PC-9 (cell line): ENCODE measurements at regions of chr14 and their contacts with region 1.

Region 1: GRCh38 chr14:75982266-75983018 is 647 bp upstream of the TGFB3 start:
- DNase-seq: peak; percentile 71 to 96
- H3K4me3 ChIP-seq: peak overlapping the region; percentile 85
- H3K27ac ChIP-seq: no peak overlapping the region
- H3K4me1 ChIP-seq: peaks cover 37% of the 10 kb centered on the region
- H3K27me3 ChIP-seq: no peaks in the 10 kb centered on the region
- CTCF ChIP-seq: peak; percentile 79

Region 2: GRCh38 chr14:75293920-75294642 is 688.4 kb before region 1 on chr14:
- CTCF ChIA-PET with region 1: interaction called, 34 read pairs
- POLR2A ChIA-PET with region 1: no interaction called
- intact Hi-C with region 1: no loop called
- DNase-seq: peak; percentile 98 to 100
- H3K4me3 ChIP-seq: peak overlapping the region; percentile 65
- H3K27ac ChIP-seq: peak overlapping the region; percentile 79
- H3K4me1 ChIP-seq: peaks cover 40% of the 10 kb centered on the region
- H3K27me3 ChIP-seq: no peaks in the 10 kb centered on the region
- CTCF ChIP-seq: no peak

Region 3: DNA sequence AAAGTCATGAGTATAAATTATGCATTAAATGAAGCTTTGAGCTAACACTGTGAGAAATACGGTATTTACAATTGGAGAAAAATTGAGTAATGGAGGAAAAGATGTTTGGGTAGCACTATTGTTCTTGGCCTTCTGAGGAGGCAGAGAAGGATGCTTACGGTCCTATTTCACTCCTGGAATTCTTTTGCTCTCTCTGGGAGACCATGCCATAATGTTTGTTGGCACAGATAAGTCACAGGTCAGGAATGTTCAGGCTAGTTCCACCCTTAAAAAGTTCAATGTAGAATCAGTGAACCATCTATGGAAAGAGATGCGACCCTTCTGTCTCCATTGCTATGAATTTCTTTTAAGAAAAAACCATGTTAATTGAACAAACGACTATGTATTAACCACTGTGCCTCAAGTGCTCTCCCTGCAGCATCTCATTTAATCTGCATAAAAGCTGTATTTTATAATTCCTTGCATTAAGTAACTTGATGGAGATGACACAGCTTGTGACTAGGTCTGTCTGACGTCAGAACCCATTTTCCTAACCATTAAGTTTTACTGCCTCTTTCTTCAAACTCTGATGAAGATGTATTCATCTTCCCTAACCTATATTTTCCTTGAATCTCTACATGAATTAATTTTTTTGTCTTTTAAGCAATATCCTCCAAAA is 450.7 kb before region 1 on chr14:
- CTCF ChIA-PET with region 1: no interaction called
- POLR2A ChIA-PET with region 1: interaction called, 10 read pairs
- intact Hi-C with region 1: no loop called
- DNase-seq: peak in 1 of 2 experiments; percentile 76
- H3K4me3 ChIP-seq: no peak overlapping the region
- H3K27ac ChIP-seq: peak overlapping the region; percentile 33
- H3K4me1 ChIP-seq: peaks cover 54% of the 10 kb centered on the region
- H3K27me3 ChIP-seq: no peaks in the 10 kb centered on the region
- CTCF ChIP-seq: no peak

Region 4: DNA sequence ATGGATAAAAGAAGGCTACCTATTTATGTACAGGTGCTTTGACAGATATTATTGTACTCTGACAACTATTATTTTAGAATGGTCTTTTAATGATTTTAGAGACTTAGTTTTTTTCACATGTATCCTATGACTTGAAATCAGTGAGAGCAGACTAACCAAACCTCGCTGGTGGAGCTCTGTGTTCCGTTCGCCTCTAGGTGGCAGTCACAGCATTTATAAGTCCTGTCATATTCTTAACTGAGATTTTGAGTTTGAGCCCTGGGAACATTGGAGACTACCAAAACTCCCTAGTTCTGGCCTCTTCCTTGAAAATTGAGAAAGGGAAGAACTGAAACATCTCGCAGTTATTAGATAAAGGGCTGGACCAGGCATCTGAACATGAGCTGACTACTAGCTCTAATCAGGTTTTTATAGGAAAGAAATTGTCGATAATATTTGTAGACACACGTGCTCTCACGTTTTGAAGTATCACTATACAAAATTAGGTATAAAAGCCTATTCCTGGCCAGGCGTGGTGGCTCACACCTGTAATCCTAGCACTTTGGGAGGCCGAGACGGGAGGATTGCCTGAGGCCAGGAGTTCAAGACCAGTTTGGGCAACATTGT is 273.1 kb before region 1 on chr14:
- CTCF ChIA-PET with region 1: interaction called, 39 read pairs
- POLR2A ChIA-PET with region 1: interaction called, 9 read pairs
- intact Hi-C with region 1: loop called (anchors 1 kb)
- DNase-seq: peak; percentile 49 to 58
- H3K4me3 ChIP-seq: no peak overlapping the region
- H3K27ac ChIP-seq: no peak overlapping the region
- H3K4me1 ChIP-seq: peaks cover 30% of the 10 kb centered on the region
- H3K27me3 ChIP-seq: no peaks in the 10 kb centered on the region
- CTCF ChIP-seq: peak; percentile 87

Region 5: GRCh38 chr14:75864352-75864751 is 118.1 kb before region 1 on chr14:
- CTCF ChIA-PET with region 1: interaction called, 15 read pairs
- POLR2A ChIA-PET with region 1: interaction called, 8 read pairs
- intact Hi-C with region 1: no loop called
- DNase-seq: peak in 1 of 2 experiments; percentile 93
- H3K4me3 ChIP-seq: no peak overlapping the region
- H3K27ac ChIP-seq: peak overlapping the region; percentile 33
- H3K4me1 ChIP-seq: peaks cover 66% of the 10 kb centered on the region
- H3K27me3 ChIP-seq: no peaks in the 10 kb centered on the region
- CTCF ChIP-seq: no peak

Region 6: DNA sequence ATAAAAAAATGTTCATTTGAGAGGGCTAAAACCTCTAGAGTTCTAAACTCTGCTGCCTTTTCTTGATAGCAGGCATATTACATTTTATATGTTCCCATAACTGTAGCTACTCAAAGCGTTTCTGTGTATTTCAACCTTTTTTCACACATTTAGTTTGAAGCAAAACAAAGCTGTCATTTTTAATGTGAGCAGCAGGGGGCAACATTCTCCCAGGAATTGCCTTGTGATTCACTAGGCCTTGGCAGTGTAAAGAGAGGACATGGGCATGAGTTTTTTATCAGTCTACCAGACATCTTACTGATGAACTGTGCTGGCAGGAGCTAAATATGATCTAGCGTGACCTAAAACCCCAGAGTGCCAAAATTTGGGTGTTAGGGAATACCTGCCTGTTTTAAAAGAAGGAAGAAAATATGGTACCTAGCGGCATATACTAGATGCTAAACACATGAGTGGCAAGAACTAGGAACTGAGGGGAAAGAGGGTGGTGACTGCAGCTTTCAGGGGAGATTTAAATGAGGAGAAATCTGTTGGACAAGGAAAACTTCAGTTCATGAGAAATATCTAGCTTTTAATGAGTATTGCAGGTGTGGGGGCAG is 68.5 kb after region 1 on chr14:
- CTCF ChIA-PET with region 1: no interaction called
- POLR2A ChIA-PET with region 1: no interaction called
- intact Hi-C with region 1: no loop called
- DNase-seq: peak; percentile 59 to 64
- H3K4me3 ChIP-seq: no peak overlapping the region
- H3K27ac ChIP-seq: no peak overlapping the region
- H3K4me1 ChIP-seq: no peaks in the 10 kb centered on the region
- H3K27me3 ChIP-seq: no peaks in the 10 kb centered on the region
- CTCF ChIP-seq: peak; percentile 99

Region 7: DNA sequence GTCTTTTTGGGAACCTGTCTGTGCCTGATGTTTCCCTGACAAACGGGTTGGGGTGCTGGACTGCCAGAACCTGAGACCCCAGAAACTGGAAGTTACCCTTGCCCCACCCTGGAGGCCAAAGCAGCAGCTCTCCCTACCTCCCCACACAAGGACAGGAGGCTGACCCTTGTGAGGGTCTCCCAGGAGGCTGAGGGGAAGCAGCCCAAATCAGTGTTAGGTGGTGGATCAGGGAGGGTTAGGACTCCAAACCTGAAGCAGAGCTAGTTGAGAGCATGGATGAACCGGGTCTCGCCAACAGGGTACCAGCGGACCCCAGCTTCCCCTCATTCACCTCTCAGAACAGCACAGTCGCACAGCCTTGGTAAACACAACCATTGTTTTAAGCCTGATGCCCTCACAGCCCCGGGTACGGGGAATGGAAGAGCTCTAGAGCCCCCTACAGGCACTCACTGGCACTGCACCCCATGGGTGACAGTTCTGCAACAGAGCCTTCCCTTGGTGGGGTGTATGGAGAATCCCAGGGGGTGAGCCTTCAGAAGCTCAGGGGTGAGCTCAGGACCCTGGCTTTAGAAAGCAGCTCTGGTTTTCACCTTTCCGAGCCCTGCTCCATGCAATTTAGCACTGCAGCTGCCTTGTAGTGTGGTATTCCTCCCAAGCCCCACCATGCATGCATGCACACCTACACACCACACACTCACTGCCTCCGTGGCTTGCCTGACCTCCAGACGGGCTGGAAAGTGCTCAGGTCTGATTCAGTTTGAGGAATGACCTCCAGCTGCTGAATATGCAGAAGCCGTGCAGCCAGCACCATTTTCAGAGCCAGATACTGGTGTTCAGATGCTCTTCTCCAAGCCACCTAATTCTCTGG is 404.7 kb after region 1 on chr14:
- CTCF ChIA-PET with region 1: interaction called, 4 read pairs
- POLR2A ChIA-PET with region 1: no interaction called
- intact Hi-C with region 1: loop called (anchors 5 kb)
- DNase-seq: peak; percentile 55 to 87
- H3K4me3 ChIP-seq: no peak overlapping the region
- H3K27ac ChIP-seq: no peak overlapping the region
- H3K4me1 ChIP-seq: no peaks in the 10 kb centered on the region
- H3K27me3 ChIP-seq: peaks cover 97% of the 10 kb centered on the region
- CTCF ChIP-seq: peak; percentile 100